ENCODE measurements at regions of chr18 and their contacts with region 1.

Region 1: DNA sequence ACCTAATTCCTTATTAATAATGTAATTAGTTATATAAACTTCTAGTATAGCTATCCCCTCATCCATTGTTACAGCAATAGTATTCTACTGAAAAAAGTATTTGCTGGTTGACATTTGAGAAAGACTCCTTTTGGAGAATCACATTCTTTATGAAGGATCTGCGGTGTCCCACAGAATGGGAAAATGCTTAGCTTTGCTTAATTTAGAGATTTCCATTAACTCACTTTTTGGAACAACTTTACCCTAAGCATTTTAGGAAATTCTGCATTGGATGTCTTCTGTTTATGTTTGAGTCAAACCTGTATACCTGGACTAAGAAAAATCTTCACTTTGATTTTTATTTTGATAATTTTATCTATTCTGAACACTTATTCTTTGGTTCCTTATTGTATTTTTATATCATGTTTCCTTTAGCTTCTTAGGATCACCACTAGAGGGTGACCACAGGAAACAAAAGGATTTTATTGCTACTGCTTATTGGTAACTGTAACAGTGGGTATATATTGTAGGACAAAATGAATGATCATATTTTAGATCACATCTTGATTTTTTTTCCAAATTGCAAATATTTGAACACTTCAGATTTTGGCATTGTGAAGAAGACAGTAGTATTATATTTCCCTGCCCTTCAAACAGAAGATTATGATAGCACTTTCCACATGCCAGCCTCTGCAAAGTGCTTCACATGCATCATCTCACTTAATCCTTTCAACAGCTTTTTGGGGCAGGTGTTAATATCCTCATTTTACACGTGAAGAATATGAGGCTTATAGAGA is 79.6 kb downstream of the MIB1 start:
- DNase-seq: no peak
- ATAC-seq: peak; percentile 53 to 71 (median 62)
- H3K4me3 ChIP-seq: no peak overlapping the region
- H3K27ac ChIP-seq: peak overlapping the region; percentile 86
- H3K4me1 ChIP-seq: no peaks in the 10 kb centered on the region
- H3K27me3 ChIP-seq: no peaks in the 10 kb centered on the region
- CTCF ChIP-seq: peak; percentile 70

Region 2: DNA sequence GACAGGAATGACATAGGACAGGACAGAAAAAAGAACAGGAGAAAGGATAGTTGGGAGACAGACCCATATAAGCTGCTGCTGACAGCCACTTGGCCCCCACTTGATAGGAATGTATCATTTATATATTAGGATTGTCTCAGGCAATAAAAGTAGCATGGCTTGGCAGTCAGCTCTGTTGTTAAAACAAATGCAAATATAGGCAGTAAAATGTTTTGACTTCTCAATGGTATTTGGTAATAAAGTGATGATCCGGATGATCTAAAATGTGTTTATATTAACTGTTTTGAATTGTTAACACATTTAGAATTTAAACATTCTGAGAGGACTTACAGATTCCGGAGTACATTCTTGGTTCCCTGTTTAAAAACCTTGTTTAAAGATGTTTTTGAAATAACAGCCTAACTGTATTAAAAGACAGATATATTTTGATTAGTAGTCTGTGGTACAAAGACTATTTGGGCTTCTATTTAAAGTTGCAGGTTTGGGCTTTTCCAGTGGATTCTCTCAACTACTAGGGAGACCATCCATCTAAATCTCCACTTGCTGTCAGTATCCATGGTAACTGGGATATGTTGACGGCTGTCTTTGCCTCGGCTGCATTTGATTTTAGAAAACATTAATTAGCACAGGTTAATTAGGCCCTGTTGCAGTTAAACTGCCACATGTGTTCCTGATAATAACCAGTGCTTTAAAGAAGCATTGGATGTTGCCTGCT is 367.3 kb before region 1 on chr18:
- intact Hi-C with region 1: loop called in 1 of 2 experiments (anchors 10 kb)
- DNase-seq: no peak
- ATAC-seq: peak in 1 of 4 donors; percentile 21
- H3K4me3 ChIP-seq: peak overlapping the region; percentile 23
- H3K27ac ChIP-seq: peak overlapping the region; percentile 85
- H3K4me1 ChIP-seq: peaks cover 51% of the 10 kb centered on the region
- H3K27me3 ChIP-seq: no peaks in the 10 kb centered on the region
- CTCF ChIP-seq: no peak

Region 3: DNA sequence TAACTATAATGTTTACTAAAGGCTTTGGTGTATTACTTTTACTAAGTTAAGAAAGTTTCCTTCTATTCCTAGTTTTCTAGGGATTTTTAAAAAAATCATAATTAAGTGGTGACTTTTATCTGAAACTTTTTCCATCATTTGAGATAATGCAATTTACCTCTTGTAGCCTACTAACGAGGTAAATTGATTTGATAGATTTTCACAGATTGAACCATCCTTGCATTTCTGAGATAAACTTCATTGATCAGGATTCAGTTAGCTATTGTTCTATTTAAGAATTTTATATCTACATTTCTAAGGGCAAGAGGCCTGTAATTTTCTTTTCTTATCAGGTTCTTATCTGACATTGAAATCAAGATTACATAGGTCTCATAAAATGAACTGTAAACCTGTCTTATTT is 98.5 kb after region 1 on chr18:
- intact Hi-C with region 1: no loop called
- DNase-seq: no peak
- ATAC-seq: no peak
- H3K4me3 ChIP-seq: no peak overlapping the region
- H3K27ac ChIP-seq: no peak overlapping the region
- H3K4me1 ChIP-seq: no peaks in the 10 kb centered on the region
- H3K27me3 ChIP-seq: no peaks in the 10 kb centered on the region
- CTCF ChIP-seq: no peak

Region 4: GRCh38 chr18:22609642-22610041 is 789.4 kb after region 1 on chr18:
- intact Hi-C with region 1: no loop called
- DNase-seq: peak in 1 of 2 donors; percentile 25
- ATAC-seq: no peak
- H3K4me3 ChIP-seq: no peak overlapping the region
- H3K27ac ChIP-seq: peak overlapping the region; percentile 31
- H3K4me1 ChIP-seq: no peaks in the 10 kb centered on the region
- H3K27me3 ChIP-seq: no peaks in the 10 kb centered on the region
- CTCF ChIP-seq: no peak

Measured in psoas muscle (tissue), 8 donors.